Panc1 (cell line): ENCODE measurements at regions of chr2 and their contacts with region 1.

Region 1: GRCh38 chr2:172674034-172674967 is 61.3 kb upstream of the RAPGEF4 start:
- DNase-seq: no peak
- ATAC-seq: peak; percentile 95
- H3K4me3 ChIP-seq: peak overlapping the region in 1 of 2 experiments; percentile 0; a peak in 1 of 4 replicates
- H3K27ac ChIP-seq: no peak overlapping the region
- H3K4me1 ChIP-seq: no peaks in the 10 kb centered on the region; the same call in 1 of the 2 replicates
- H3K27me3 ChIP-seq: no peaks in the 10 kb centered on the region
- CTCF ChIP-seq: peak; percentile 80

Region 2: DNA sequence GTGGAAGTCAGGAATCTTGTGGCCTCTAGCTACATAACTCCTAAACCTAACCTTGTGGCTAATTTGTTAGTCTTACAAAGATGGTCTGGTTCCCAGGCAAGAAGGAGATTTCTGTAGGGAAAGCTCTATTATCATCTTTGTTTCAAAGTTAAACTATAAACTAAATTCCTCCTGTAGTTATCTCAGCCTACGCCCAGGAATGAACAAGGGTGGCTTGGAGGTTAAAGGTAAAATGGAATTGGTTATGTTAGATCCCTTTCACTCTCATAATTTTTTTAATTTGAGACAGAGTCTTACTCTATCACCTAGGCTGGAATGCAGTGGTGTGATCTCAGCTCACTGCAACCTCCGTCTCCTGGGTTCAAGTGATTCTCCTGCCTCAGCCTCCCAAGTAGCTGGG is 143.0 kb before region 1 on chr2:
- CTCF ChIA-PET with region 1: no interaction called
- POLR2A ChIA-PET with region 1: no interaction called
- in situ Hi-C with region 1: no loop called
- intact Hi-C with region 1: no loop called
- DNase-seq: no peak
- ATAC-seq: no peak
- H3K4me3 ChIP-seq: no peak overlapping the region
- H3K27ac ChIP-seq: no peak overlapping the region
- H3K4me1 ChIP-seq: no peaks in the 10 kb centered on the region
- H3K27me3 ChIP-seq: no peaks in the 10 kb centered on the region
- CTCF ChIP-seq: no peak

Region 3: DNA sequence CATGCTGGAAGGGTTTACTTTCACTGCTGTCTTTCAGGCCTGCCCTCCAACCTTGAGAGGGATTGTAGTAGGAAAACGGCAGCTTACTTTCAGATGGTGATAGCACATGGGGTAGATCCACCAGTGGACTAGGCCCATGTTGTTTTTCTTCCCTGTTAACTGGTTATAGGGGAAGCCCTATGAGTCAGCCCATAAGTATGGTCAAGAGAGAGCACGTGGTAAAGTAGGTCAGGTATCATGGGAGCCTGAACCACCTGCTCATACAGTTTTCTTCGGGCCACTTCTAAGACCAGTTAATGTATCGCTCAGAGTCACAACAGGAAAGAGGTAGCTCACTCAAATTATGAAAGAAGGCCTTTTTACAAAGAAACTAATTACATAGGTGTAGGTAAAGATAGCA is 85.4 kb before region 1 on chr2:
- CTCF ChIA-PET with region 1: no interaction called
- POLR2A ChIA-PET with region 1: no interaction called
- in situ Hi-C with region 1: no loop called
- intact Hi-C with region 1: no loop called
- DNase-seq: no peak
- ATAC-seq: no peak
- H3K4me3 ChIP-seq: no peak overlapping the region
- H3K27ac ChIP-seq: no peak overlapping the region
- H3K4me1 ChIP-seq: no peaks in the 10 kb centered on the region
- H3K27me3 ChIP-seq: no peaks in the 10 kb centered on the region
- CTCF ChIP-seq: no peak

Region 4: GRCh38 chr2:172606285-172606684 is 68.0 kb before region 1 on chr2:
- CTCF ChIA-PET with region 1: no interaction called
- POLR2A ChIA-PET with region 1: no interaction called
- in situ Hi-C with region 1: no loop called
- intact Hi-C with region 1: loop called (anchors 5 kb)
- DNase-seq: no peak
- ATAC-seq: no peak
- H3K4me3 ChIP-seq: no peak overlapping the region
- H3K27ac ChIP-seq: no peak overlapping the region
- H3K4me1 ChIP-seq: no peaks in the 10 kb centered on the region
- H3K27me3 ChIP-seq: no peaks in the 10 kb centered on the region
- CTCF ChIP-seq: no peak

Region 5: DNA sequence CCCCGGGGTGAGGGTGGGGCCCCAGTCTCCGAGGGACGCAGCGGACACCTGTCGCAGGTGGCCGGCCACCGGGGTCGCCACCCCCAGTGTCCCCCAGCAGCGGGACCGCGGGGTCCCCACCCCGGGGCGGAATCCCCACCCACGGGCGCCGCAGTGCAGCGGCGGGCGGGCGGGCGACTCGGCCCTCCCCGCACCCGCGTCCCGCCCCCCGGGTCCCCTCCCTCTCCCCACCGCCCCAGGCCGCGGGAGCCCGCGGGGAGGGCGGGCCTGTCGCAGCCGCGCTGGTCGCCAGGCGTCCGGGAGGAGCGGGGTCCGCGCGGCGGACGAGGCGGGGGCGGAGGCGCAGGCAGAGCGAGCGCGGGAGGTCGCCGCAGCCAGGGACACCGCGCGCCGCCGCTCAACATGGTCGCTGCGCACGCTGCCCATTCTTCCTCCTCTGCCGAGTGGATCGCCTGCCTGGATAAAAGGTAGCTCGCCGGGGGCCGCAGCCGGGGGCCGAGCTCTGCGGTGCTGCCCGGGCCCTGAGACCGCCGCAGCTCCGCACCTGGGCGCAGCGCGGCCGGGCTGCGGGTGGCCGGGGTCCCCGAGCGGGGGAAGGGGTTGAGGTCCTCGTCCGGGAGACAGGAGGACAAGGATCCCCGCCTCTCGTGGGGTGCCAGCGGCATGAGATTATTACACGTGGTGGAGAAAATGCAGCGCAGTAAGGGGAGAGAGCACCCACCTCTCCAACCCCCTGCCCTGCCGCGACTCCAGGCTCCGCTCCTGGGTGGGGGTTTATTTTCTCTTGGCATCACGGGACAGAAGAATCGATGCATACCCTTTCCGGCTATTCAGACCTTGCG is 61.5 kb after region 1 on chr2 and contains the start of gene RAPGEF4:
- CTCF ChIA-PET with region 1: no interaction called
- POLR2A ChIA-PET with region 1: no interaction called
- in situ Hi-C with region 1: no loop called
- intact Hi-C with region 1: no loop called
- DNase-seq: no peak
- ATAC-seq: peak; percentile 62
- H3K4me3 ChIP-seq: peak within 1 kb of the TSS; percentile 35 to 37
- H3K27ac ChIP-seq: no peak within 1 kb of the TSS
- H3K4me1 ChIP-seq: peaks cover 4% of the 10 kb centered on the region; the same call in 1 of the 2 replicates
- H3K27me3 ChIP-seq: peaks cover 45% of the 10 kb centered on the region
- CTCF ChIP-seq: no peak
- total RNA-seq, gene RAPGEF4: 0.62 TPM